PC-3 (cell line): ENCODE measurements at regions of chr2 and their contacts with region 1.

Region 1: GRCh38 chr2:224927646-224928173 is 114.6 kb downstream of the DOCK10 start:
- DNase-seq: peak; percentile 70
- ATAC-seq: peak; percentile 82
- H3K4me3 ChIP-seq: no peak overlapping the region
- H3K27ac ChIP-seq: peak overlapping the region; percentile 72
- H3K4me1 ChIP-seq: peaks cover 31% of the 10 kb centered on the region
- H3K27me3 ChIP-seq: no peaks in the 10 kb centered on the region
- CTCF ChIP-seq: no peak

Region 2: GRCh38 chr2:224816816-224817215 is 110.9 kb before region 1 on chr2:
- CTCF ChIA-PET with region 1: no interaction called
- POLR2A ChIA-PET with region 1: no interaction called
- intact Hi-C with region 1: loop called (anchors 5 kb)
- DNase-seq: peak; percentile 82
- ATAC-seq: peak; percentile 88
- H3K4me3 ChIP-seq: no peak overlapping the region
- H3K27ac ChIP-seq: peak overlapping the region; percentile 28
- H3K4me1 ChIP-seq: peaks cover 23% of the 10 kb centered on the region
- H3K27me3 ChIP-seq: no peaks in the 10 kb centered on the region
- CTCF ChIP-seq: no peak

Region 3: DNA sequence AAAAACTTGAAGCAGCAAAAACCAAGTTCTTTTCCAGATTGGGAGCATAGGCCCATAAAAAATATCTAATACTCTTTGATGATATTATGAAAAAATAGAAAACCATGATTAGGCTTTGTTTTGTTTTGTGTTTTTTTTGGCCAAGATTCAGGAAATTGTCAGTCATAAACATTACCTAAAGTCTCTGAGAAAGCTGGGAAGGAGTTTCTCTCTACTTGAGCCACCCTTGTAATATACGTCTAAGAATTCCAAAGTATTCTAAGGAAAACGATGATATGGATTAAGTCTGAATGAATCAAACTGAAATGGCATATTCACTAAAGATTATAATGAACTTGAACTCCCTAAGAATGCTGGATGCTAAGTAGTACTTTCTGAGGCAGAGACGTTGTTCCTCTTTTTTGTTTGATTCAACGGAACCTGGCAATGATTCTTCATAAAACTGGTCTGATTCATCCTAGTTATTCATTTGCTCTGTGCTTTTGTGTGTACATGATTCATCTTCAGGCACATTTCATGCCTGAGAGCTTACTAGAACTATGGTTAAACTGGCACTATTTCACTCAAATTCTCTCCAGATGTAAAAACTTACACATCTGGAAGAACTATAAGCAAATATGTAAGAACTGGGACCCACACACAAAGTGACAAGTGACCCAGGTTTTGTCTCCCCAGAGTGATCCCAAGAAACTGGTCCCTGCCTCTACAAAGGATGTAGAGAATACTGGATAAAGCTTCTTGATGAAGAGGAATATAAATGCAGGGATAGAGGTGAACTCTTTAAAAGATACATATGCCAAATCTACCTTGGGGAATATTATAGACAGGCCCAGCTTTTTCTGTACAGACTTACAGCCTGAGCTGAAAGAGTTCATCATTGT is 45.2 kb before region 1 on chr2:
- CTCF ChIA-PET with region 1: no interaction called
- POLR2A ChIA-PET with region 1: no interaction called
- intact Hi-C with region 1: loop called (anchors 2 kb)
- DNase-seq: peak; percentile 87
- ATAC-seq: peak; percentile 84
- H3K4me3 ChIP-seq: no peak overlapping the region
- H3K27ac ChIP-seq: peak overlapping the region; percentile 72
- H3K4me1 ChIP-seq: peaks cover 50% of the 10 kb centered on the region
- H3K27me3 ChIP-seq: no peaks in the 10 kb centered on the region
- CTCF ChIP-seq: no peak

Region 4: GRCh38 chr2:224948859-224949258 is 21.1 kb after region 1 on chr2:
- CTCF ChIA-PET with region 1: no interaction called
- POLR2A ChIA-PET with region 1: no interaction called
- intact Hi-C with region 1: loop called (anchors 2 kb)
- DNase-seq: peak; percentile 56
- ATAC-seq: peak; percentile 74
- H3K4me3 ChIP-seq: no peak overlapping the region
- H3K27ac ChIP-seq: no peak overlapping the region
- H3K4me1 ChIP-seq: peaks cover 10% of the 10 kb centered on the region
- H3K27me3 ChIP-seq: no peaks in the 10 kb centered on the region
- CTCF ChIP-seq: no peak

Region 5: DNA sequence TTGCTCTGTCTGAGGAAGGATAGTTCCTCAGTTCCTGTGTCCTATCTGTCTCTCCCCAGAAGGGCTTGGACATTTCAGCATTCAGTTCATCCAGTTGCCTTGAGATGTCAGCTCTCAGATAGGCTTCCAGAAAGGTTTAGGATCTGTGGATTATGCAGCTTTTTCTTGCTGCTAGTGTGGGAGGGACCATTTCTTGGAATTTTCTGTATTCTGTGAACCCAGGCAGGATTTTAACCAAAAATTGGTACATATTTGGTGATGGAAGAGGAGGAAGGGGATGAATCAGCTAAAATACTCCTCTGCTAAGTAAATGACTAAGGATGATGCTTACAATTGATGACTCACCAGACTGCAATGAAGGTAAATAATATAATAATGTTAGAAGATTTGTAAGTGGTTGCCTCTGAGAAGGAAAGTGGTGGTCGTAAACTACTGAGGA is 173.2 kb after region 1 on chr2:
- CTCF ChIA-PET with region 1: no interaction called
- POLR2A ChIA-PET with region 1: no interaction called
- intact Hi-C with region 1: loop called (anchors 1 kb)
- DNase-seq: peak; percentile 94
- ATAC-seq: peak; percentile 58
- H3K4me3 ChIP-seq: peak overlapping the region; percentile 46
- H3K27ac ChIP-seq: peak overlapping the region; percentile 98
- H3K4me1 ChIP-seq: peaks cover 71% of the 10 kb centered on the region
- H3K27me3 ChIP-seq: no peaks in the 10 kb centered on the region
- CTCF ChIP-seq: no peak